ENCODE measurements at regions of chr2 and their contacts with region 1.

Region 1: DNA sequence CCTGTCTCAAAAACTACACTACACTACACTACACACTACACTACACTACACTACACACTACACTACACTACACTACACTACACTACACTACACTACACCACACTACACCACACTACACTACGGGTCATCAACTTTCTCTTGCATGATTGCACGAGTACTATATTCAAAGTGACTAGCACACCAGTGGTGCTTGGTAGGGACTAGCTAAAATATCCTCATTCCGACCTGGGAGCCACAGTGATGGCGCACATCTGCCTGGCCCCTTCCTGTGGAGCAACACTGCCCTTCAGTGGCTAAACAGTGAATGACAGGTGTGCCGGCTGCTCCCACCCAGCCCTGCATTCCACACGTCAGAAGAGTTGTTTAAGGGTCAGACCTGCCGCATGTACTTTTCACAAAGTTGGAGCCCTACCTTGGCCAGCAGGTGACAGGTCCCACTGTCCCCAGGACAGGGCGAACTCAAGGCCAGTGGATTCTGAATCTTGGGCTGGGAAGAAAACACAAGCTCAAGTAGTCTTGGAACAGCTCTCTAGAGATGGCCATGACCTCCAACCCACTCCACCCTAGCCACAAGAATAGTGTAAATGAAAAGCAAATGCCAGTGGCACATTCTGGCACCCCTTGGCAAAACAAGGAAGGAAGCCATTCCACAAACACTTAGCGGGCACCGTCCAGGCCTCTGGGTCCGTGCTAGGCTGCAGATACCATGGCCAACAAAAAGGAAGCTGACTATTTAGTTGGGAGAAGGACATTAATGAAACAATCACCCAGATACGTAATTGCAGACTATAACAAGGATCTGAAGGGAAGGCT is 79.7 kb upstream of the MSH2 start:
- DNase-seq: peak; percentile 71
- H3K4me3 ChIP-seq: no peak overlapping the region
- H3K27ac ChIP-seq: no peak overlapping the region
- H3K4me1 ChIP-seq: no peaks in the 10 kb centered on the region
- H3K27me3 ChIP-seq: no peaks in the 10 kb centered on the region
- CTCF ChIP-seq: peak; percentile 89 to 90
- POLR2A ChIP-seq: no peak

Region 2: DNA sequence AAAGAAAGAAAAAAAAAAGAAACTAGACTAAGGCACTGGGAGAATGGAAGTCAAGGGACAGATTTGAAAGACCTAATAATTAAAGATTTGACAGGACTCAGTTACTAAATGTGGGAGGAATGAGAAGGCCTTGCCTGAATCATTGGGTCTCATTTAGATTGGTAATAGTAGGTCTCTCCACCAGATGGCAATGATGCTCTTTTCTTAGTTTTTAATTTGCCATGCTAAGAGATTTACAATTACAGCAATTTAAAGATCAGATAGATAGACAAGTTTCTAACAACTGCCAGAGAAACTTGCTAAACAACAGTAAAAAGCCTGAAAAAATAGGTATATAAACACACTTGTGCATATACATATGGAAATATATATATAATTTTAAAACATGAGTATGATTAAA is 690.9 kb before region 1 on chr2:
- CTCF ChIA-PET with region 1: interaction called, 4 read pairs
- POLR2A ChIA-PET with region 1: no interaction called
- dilution Hi-C with region 1: no loop called
- intact Hi-C with region 1: loop called (anchors 1 kb)
- DNase-seq: peak; percentile 79
- H3K4me3 ChIP-seq: no peak overlapping the region
- H3K27ac ChIP-seq: no peak overlapping the region
- H3K4me1 ChIP-seq: no peaks in the 10 kb centered on the region
- H3K27me3 ChIP-seq: no peaks in the 10 kb centered on the region
- CTCF ChIP-seq: peak; percentile 21 to 41
- POLR2A ChIP-seq: no peak

Region 3: GRCh38 chr2:46893269-46893945 is 429.8 kb before region 1 on chr2:
- CTCF ChIA-PET with region 1: interaction called, 13 read pairs
- POLR2A ChIA-PET with region 1: no interaction called
- dilution Hi-C with region 1: no loop called
- intact Hi-C with region 1: loop called (anchors 1 kb)
- DNase-seq: no peak
- H3K4me3 ChIP-seq: no peak overlapping the region
- H3K27ac ChIP-seq: no peak overlapping the region
- H3K4me1 ChIP-seq: no peaks in the 10 kb centered on the region
- H3K27me3 ChIP-seq: no peaks in the 10 kb centered on the region
- CTCF ChIP-seq: no peak
- POLR2A ChIP-seq: no peak

Region 4: GRCh38 chr2:46923041-46923528 is 400.1 kb before region 1 on chr2:
- CTCF ChIA-PET with region 1: interaction called, 71 read pairs
- POLR2A ChIA-PET with region 1: no interaction called
- dilution Hi-C with region 1: no loop called
- intact Hi-C with region 1: loop called (anchors 1 kb)
- DNase-seq: no peak
- H3K4me3 ChIP-seq: no peak overlapping the region
- H3K27ac ChIP-seq: no peak overlapping the region
- H3K4me1 ChIP-seq: peaks cover 23% of the 10 kb centered on the region
- H3K27me3 ChIP-seq: no peaks in the 10 kb centered on the region
- CTCF ChIP-seq: no peak
- POLR2A ChIP-seq: no peak

Region 5: DNA sequence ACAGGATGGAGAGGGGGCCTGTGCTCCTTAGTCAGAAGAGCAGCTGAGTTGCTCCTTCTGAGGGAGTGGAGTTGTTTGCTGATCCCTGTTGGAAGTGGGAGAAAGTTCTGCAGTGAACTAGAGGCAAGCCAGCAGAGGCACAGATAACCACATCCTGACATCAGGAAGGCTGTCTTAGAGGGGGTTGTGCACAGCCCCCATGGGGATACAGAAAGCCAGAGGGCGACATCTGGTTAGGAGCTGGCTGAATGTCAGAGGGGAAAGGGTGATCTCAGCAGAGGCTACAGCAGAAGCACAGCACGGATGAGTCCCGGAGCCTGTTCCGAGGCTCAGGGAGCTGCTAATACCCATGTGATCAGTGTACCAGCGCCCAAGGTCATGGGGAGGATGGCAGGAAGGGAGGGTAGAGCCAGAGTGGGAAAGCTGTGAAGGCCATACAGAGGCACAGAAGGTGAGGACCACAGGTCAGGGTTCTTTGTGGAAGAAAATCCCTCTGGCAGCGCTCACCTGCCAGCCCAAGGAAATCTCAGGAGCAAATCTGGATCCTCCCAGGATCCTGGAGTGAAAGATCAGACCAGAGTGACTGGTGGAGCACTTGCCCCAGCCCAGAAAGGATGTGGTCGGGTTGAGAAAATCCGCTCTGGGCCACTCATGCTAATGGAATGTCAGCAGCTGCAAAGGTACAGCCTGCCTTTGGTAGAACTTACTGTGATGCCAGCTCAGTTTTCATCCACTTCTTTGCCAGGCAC is 279.9 kb before region 1 on chr2:
- CTCF ChIA-PET with region 1: interaction called, 15 read pairs
- POLR2A ChIA-PET with region 1: no interaction called
- dilution Hi-C with region 1: no loop called
- intact Hi-C with region 1: no loop called
- DNase-seq: peak; percentile 82
- H3K4me3 ChIP-seq: no peak overlapping the region
- H3K27ac ChIP-seq: peak overlapping the region; percentile 97
- H3K4me1 ChIP-seq: peaks cover 28% of the 10 kb centered on the region
- H3K27me3 ChIP-seq: no peaks in the 10 kb centered on the region
- CTCF ChIP-seq: no peak
- POLR2A ChIP-seq: no peak

Region 6: GRCh38 chr2:47195149-47195548 is 128.1 kb before region 1 on chr2:
- CTCF ChIA-PET with region 1: interaction called, 14 read pairs
- POLR2A ChIA-PET with region 1: no interaction called
- dilution Hi-C with region 1: no loop called
- intact Hi-C with region 1: no loop called
- DNase-seq: peak; percentile 79
- H3K4me3 ChIP-seq: no peak overlapping the region
- H3K27ac ChIP-seq: no peak overlapping the region
- H3K4me1 ChIP-seq: peaks cover 34% of the 10 kb centered on the region
- H3K27me3 ChIP-seq: no peaks in the 10 kb centered on the region
- CTCF ChIP-seq: no peak
- POLR2A ChIP-seq: no peak

Region 7: DNA sequence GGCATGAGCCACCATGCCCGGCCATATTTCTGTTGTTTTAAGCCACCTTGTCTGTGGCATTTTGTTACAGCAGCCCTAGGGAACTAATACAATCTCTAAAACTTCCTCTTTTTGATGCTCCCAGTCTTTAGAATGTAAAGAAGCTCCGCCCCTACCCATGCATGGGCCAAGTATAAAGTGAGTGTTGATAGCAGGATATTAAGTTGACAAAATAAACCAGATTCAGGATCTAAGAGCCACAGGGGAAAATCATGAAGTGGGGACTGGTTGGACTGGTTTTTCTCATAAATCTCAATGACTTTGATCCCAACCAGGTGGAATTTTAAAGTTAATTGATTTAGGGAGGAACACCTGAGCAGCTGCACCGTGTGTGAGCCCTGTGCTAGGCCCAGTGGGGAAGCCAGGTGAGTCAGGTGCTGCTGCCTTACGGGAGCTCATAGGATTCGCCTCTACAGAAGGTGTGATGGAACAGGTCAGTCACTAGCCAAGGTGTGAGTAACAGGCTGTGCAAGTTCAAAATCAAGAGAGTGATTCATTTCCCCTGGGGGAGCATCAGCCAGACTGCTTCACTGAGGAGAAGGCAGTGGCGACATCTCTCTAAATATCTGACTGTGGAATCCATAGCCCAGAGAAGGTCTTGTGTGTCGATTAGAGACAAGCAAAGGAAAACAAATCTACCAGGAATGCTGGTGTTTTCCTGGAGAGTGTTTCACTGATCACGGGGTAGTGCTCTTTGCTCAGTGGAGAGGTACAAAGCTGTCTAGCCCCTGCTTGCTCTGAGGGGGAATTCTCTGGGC is 16.7 kb after region 1 on chr2:
- CTCF ChIA-PET with region 1: interaction called, 15 read pairs
- POLR2A ChIA-PET with region 1: no interaction called
- dilution Hi-C with region 1: no loop called
- intact Hi-C with region 1: no loop called
- DNase-seq: no peak
- H3K4me3 ChIP-seq: no peak overlapping the region
- H3K27ac ChIP-seq: no peak overlapping the region
- H3K4me1 ChIP-seq: peaks cover 5% of the 10 kb centered on the region
- H3K27me3 ChIP-seq: no peaks in the 10 kb centered on the region
- CTCF ChIP-seq: no peak
- POLR2A ChIP-seq: no peak

Region 8: GRCh38 chr2:47373747-47374146 is 50.5 kb after region 1 on chr2:
- CTCF ChIA-PET with region 1: no interaction called
- POLR2A ChIA-PET with region 1: no interaction called
- dilution Hi-C with region 1: no loop called
- intact Hi-C with region 1: no loop called
- DNase-seq: no peak
- H3K4me3 ChIP-seq: no peak overlapping the region
- H3K27ac ChIP-seq: no peak overlapping the region
- H3K4me1 ChIP-seq: peaks cover 9% of the 10 kb centered on the region
- H3K27me3 ChIP-seq: peaks cover 5 to 8% of the 10 kb centered on the region in 2 experiments
- CTCF ChIP-seq: no peak
- POLR2A ChIP-seq: no peak